HepG2 (cell line): ENCODE measurements at regions of chr6 and their contacts with region 1.

Region 1: DNA sequence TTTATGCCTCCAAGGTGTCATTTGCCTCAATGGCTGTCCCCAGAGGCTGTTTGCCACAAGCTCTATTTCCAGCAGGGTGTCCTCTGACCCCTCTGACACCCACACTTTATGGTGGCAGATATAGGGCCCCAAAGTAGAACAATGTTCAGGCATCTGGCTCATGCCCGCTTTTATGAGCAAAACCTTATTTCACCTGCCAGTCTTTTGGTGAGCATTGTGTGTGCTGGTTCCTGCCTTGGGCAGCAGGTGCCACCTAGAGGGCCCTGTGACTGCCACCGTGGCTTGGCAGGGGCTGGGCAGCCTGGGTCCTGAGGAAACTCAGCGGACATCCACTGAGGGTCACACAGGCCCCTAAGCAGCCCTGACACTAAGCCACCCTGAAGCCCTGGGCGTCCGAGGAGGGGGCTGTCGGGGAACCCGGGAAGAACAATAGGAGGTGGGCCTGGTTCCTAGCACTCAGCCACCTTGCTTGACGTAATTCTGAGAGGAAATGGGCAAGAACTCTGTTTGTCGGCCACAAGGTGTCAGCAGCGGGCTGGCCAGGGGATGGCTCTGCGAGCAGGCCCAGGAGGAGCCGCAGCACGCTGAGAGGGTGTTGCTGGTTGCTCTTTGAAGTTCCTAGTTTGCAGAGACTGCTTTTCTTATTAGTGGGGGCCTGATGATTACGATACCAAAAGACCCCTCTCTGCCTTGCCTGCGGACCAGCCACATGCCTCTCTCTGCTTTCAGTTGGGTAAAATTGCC is 148.9 kb downstream of the SCML4 start:
- DNase-seq: peak; percentile 75
- ATAC-seq: peak; percentile 98
- H3K4me3 ChIP-seq: peak overlapping the region; percentile 41 to 67 (median 52); a peak in 5 of 6 replicates
- H3K27ac ChIP-seq: no peak overlapping the region
- H3K4me1 ChIP-seq: peaks cover 34% of the 10 kb centered on the region
- H3K27me3 ChIP-seq: peaks cover 0 to 3% of the 10 kb centered on the region in 2 experiments; a peak in 1 of 5 replicates
- CTCF ChIP-seq: peak; percentile 94
- EP300 ChIP-seq: no peak
- POLR2A ChIP-seq: no peak
- RAD21 ChIP-seq: peak; percentile 92

Region 2: DNA sequence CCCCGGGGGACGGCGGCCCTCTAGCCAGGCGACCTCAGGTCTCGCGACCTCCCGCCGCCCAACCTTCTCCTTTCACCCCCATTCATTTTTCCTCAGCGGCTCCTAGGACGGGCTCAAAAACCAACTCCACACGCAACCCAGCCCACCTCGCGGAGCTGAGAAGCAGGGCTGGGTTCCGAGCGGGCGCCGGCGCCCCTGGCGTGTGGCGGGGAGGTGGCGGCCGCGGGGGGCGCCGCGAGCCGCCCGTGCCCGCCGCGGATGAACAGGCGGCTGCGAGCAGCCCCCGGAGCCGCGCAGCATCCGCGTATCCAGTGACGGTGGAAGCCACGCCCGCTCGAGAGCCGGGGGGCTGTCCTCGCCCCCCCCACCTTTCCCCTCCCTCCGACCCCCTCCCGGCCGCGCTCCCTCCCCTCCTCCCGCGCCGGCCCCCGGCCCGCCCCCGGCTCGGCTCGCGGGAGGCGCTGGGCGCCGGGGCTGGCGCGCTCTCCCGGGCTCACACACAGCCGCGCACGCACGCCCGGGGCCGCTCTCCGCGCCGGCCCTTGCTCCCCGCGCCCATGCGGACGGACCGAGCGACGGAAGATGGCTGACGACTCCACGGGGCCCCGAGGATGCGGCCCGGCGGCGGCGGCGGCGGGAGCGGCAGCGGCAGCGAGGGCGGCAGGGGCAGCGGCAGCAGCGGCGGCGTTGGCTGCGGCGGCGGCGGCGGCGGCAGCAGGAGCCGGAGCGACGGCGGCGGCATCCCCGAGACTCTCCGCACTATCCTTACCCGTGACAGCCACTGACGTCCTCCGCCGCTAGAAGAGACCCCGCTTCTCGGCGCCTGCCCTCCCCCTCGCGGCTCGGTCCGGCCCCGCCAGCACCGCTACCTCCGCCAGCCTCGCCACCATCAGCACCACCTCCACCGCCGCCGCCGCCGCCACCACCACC is 185.3 kb before region 1 on chr6 and contains the start of gene SOBP:
- CTCF ChIA-PET with region 1: no interaction called
- POLR2A ChIA-PET with region 1: no interaction called
- in situ Hi-C with region 1: no loop called
- intact Hi-C with region 1: loop called (anchors 1 kb)
- DNase-seq: peak; percentile 44
- ATAC-seq: peak; percentile 36
- H3K4me3 ChIP-seq: peak within 1 kb of the TSS; percentile 94 to 98 (median 96)
- H3K27ac ChIP-seq: peak within 1 kb of the TSS; percentile 76
- H3K4me1 ChIP-seq: peaks cover 35% of the 10 kb centered on the region
- H3K27me3 ChIP-seq: no peaks in the 10 kb centered on the region; a peak in 2 of 5 replicates
- CTCF ChIP-seq: no peak
- EP300 ChIP-seq: no peak
- POLR2A ChIP-seq: peak in 1 of 2 experiments; percentile 60; a peak in 2 of 4 replicates
- RAD21 ChIP-seq: 0 out of 2 replicates have a peak, but pooled peaks have one; percentile 32
- total RNA-seq, gene SOBP: 5.0 and 6.9 TPM in 2 replicates

Region 3: DNA sequence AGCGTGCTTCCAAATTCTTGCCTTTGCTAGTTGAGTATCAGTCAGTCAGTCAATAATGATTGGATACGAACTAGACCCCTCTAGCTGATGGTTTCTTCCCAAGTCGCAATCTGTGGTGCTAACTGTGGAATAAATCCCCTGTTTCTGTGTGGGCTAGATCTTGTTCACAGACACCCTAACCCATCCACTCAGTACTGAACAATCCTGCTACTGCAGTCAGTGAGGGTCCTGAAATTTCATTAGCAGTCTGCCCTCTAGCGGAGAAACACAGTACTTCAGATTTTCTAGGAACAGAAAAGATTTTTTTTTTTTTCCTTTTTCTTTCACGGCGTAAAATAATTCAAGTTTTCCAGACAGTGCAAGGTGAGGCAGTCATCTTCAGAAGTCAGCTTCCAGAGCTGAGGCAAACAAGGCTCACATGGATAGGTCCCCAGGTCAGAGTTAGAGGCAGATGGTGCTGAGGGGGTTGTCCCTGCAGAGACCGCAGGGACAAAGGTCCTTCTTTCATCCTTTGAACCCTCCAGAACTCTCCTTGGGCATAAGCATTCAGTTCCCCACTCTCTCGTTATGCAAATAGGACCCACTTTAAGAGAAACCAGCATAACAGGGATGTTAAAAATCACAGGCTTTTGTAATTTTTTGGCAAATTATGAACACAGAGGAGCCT is 29.3 kb after region 1 on chr6:
- CTCF ChIA-PET with region 1: interaction called, 15 read pairs
- POLR2A ChIA-PET with region 1: no interaction called
- in situ Hi-C with region 1: no loop called
- intact Hi-C with region 1: loop called (anchors 2 kb)
- DNase-seq: peak; percentile 29
- ATAC-seq: peak; percentile 61
- H3K4me3 ChIP-seq: no peak overlapping the region; a peak in 1 of 6 replicates
- H3K27ac ChIP-seq: no peak overlapping the region
- H3K4me1 ChIP-seq: peaks cover 11% of the 10 kb centered on the region
- H3K27me3 ChIP-seq: peaks cover 2 to 9% of the 10 kb centered on the region in 2 experiments; a peak in 2 of 5 replicates
- CTCF ChIP-seq: peak; percentile 71
- EP300 ChIP-seq: no peak
- POLR2A ChIP-seq: no peak
- RAD21 ChIP-seq: no peak

Region 4: DNA sequence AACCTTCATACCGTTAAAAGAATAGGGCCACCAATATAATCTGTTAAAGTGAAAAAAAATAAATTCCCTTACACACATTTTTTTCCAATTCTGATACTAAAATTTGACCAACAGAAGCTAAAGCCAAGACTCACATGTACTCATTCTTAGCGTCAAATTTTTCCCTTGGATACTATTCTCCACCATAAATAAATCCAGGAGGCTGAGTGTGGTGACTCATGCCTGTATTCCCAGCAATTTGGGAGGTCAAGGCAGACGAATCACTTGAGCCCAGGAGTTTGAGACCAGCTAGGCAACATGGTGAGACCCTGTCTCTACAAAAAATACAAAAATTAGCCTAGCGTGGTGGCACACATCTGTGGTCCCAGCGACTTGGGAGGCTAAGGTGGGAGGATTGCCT is 105.1 kb after region 1 on chr6:
- CTCF ChIA-PET with region 1: no interaction called
- POLR2A ChIA-PET with region 1: no interaction called
- in situ Hi-C with region 1: no loop called
- intact Hi-C with region 1: no loop called
- DNase-seq: no peak
- ATAC-seq: no peak
- H3K4me3 ChIP-seq: no peak overlapping the region
- H3K27ac ChIP-seq: no peak overlapping the region
- H3K4me1 ChIP-seq: no peaks in the 10 kb centered on the region
- H3K27me3 ChIP-seq: peaks cover 0 to 11% of the 10 kb centered on the region in 2 experiments; a peak in 3 of 5 replicates
- CTCF ChIP-seq: no peak
- EP300 ChIP-seq: no peak
- POLR2A ChIP-seq: no peak
- RAD21 ChIP-seq: no peak

Region 5: GRCh38 chr6:107847844-107848802 is 173.0 kb after region 1 on chr6:
- CTCF ChIA-PET with region 1: interaction called, 20 read pairs
- POLR2A ChIA-PET with region 1: interaction called, 3 read pairs
- in situ Hi-C with region 1: loop called (anchors 5 kb)
- intact Hi-C with region 1: loop called (anchors 1 kb)
- DNase-seq: peak; percentile 58
- ATAC-seq: peak; percentile 97
- H3K4me3 ChIP-seq: peak overlapping the region in 2 of 3 experiments; percentile 32 to 66; a peak in 4 of 6 replicates
- H3K27ac ChIP-seq: no peak overlapping the region
- H3K4me1 ChIP-seq: peaks cover 6% of the 10 kb centered on the region
- H3K27me3 ChIP-seq: peaks cover 0 to 14% of the 10 kb centered on the region in 2 experiments; a peak in 3 of 5 replicates
- CTCF ChIP-seq: peak; percentile 96
- EP300 ChIP-seq: no peak
- POLR2A ChIP-seq: no peak
- RAD21 ChIP-seq: peak; percentile 94

Region 6: DNA sequence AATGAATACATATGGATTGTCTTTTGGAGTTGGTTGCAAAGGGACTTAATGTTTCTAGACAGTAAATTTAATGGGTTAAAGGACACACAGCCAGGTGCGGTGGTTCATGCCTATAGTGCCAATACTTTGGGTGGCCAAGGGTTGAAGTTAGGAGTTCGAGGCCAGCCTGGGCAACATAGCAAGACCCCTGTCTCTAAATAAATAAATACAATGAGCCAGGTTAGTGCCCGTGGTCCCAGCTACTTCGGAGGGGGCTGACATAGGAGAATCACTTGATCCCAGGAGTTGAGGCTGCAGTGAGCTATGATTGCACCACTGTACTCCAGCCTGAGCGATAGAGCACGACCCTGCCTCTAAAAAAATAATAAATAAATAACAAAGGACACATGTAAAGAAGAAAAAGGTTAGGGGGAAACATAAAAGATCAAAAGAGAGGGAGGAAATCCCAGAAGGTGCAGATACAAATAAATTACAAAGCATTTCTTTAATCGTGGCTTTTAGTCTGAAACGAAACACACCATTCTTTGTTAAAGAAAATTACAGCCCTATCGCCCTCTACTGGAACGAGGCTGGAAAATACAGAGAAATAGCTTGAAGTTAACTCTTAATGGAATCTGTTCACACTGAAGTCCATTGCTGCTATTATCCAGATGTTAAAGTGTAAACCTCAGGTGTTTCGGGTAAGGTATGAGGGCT is 191.6 kb after region 1 on chr6:
- CTCF ChIA-PET with region 1: interaction called, 7 read pairs
- POLR2A ChIA-PET with region 1: no interaction called
- in situ Hi-C with region 1: no loop called
- intact Hi-C with region 1: loop called (anchors 5 kb)
- DNase-seq: peak; percentile 56
- ATAC-seq: peak; percentile 62
- H3K4me3 ChIP-seq: no peak overlapping the region
- H3K27ac ChIP-seq: no peak overlapping the region
- H3K4me1 ChIP-seq: no peaks in the 10 kb centered on the region
- H3K27me3 ChIP-seq: no peaks in the 10 kb centered on the region
- CTCF ChIP-seq: peak; percentile 69
- EP300 ChIP-seq: no peak
- POLR2A ChIP-seq: no peak
- RAD21 ChIP-seq: no peak